ENCODE measurements at regions of chr5 and their contacts with region 1.

Region 1: GRCh38 chr5:123344816-123345426 is 78.3 kb downstream of the CEP120 start:
- DNase-seq: peak in 1 of 2 donors; percentile 69
- H3K4me3 ChIP-seq: peak overlapping the region in 1 of 2 donors; percentile 33
- H3K27ac ChIP-seq: no peak overlapping the region
- H3K4me1 ChIP-seq: peaks cover 0 to 28% of the 10 kb centered on the region in 2 donors
- H3K27me3 ChIP-seq: no peaks in the 10 kb centered on the region
- CTCF ChIP-seq: peak; percentile 43 to 83 (median 73)

Region 2: GRCh38 chr5:123157791-123158581 is 186.9 kb before region 1 on chr5:
- intact Hi-C with region 1: loop called (anchors 5 kb)
- DNase-seq: no peak
- H3K4me3 ChIP-seq: peak overlapping the region in 1 of 2 donors; percentile 24
- H3K27ac ChIP-seq: peak overlapping the region; percentile 79 to 82
- H3K4me1 ChIP-seq: peaks cover 5 to 55% of the 10 kb centered on the region in 2 donors
- H3K27me3 ChIP-seq: no peaks in the 10 kb centered on the region
- CTCF ChIP-seq: peak in 1 of 3 experiments; percentile 11

Region 3: DNA sequence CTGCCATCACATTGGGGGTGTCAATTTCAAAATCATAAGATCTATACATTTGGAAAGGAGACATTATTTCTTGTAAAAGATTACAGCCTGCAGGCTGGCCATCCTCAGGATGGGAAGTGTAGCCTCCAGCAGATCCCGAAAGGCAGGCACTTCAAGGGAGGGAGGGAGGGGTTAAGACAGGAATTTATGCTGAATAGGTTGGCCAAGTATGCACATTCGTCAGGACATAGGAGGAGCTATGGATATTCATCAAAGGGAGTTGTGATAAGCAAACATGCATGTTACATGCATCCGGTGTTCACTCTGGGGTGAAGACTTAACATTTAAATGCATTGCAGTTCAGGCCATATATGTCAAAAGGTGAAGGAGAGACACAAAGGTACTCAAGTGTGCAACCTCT is 41.1 kb before region 1 on chr5:
- intact Hi-C with region 1: loop called (anchors 5 kb)
- DNase-seq: no peak
- H3K4me3 ChIP-seq: no peak overlapping the region
- H3K27ac ChIP-seq: no peak overlapping the region
- H3K4me1 ChIP-seq: peaks cover 0 to 6% of the 10 kb centered on the region in 2 donors
- H3K27me3 ChIP-seq: no peaks in the 10 kb centered on the region
- CTCF ChIP-seq: no peak

Measured in ascending aorta (tissue), 2 donors.